ENCODE measurements at regions of chr11 and their contacts with region 1.

Region 1: GRCh38 chr11:10556590-10556989 is 11.9 kb downstream of the LYVE1 start:
- DNase-seq: peak; percentile 41
- H3K4me3 Mint-ChIP-seq: no peak overlapping the region
- H3K27ac Mint-ChIP-seq: peak overlapping the region; percentile 3
- H3K4me1 Mint-ChIP-seq: peaks cover 33% of the 10 kb centered on the region
- H3K27me3 Mint-ChIP-seq: no peaks in the 10 kb centered on the region
- CTCF ChIP-seq: no peak

Region 2: DNA sequence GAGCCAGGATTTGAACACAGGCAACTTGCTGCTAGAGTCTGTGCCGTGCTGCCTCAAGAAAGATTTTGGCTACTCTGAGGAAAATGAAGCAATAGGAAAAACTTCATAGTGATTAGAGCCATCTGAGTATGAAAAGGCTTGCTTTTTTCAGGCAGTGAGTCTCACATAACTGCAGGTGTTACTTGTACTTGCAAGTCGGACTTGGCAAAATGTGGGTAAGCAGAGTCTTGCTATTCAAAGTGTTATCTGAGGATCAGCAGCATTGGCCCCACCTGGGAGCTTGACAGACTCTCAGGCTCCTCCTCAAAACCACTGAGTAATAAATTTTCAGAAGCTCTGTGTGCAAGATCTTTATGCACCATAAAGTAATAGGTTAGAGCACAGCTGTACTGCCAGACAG is 33.7 kb before region 1 on chr11:
- CTCF ChIA-PET with region 1: no interaction called
- intact Hi-C with region 1: no loop called
- DNase-seq: no peak
- H3K4me3 Mint-ChIP-seq: no peak overlapping the region
- H3K27ac Mint-ChIP-seq: no peak overlapping the region
- H3K4me1 Mint-ChIP-seq: peaks cover 24% of the 10 kb centered on the region
- H3K27me3 Mint-ChIP-seq: no peaks in the 10 kb centered on the region
- CTCF ChIP-seq: no peak

Region 3: GRCh38 chr11:10592331-10592730 is 35.7 kb after region 1 on chr11:
- CTCF ChIA-PET with region 1: no interaction called
- intact Hi-C with region 1: loop called (anchors 5 kb)
- DNase-seq: no peak
- H3K4me3 Mint-ChIP-seq: no peak overlapping the region
- H3K27ac Mint-ChIP-seq: peak overlapping the region; percentile 87
- H3K4me1 Mint-ChIP-seq: peaks cover 40% of the 10 kb centered on the region
- H3K27me3 Mint-ChIP-seq: no peaks in the 10 kb centered on the region
- CTCF ChIP-seq: no peak

Measured in Calu3 (cell line).